ENCODE measurements at regions of chr11 and their contacts with region 1.

Region 1: GRCh38 chr11:111370902-111371578 is 8.0 kb downstream of the POU2AF1 start:
- DNase-seq: peak; percentile 69
- H3K4me3 Mint-ChIP-seq: no peak overlapping the region
- H3K27ac Mint-ChIP-seq: peak overlapping the region; percentile 87
- H3K4me1 Mint-ChIP-seq: peaks cover 43% of the 10 kb centered on the region
- H3K27me3 Mint-ChIP-seq: no peaks in the 10 kb centered on the region

Region 2: DNA sequence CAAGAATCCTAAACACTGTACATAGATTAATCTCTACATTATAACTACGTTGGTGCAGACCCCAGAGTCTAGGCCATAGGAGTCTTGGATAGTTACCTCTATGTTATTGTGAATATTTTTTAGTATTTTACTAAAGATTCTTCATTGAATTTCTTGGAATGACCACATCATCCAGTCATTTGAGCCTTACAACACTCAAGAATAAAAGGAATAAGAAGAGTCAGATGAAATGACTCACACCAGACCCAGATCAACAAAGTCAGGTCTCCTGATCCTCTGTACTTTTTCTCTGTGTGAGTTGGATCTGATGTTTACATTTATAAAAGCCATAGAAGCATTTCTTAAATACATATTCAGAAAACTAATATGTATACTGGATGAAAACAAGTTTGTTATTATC is 479.6 kb before region 1 on chr11:
- CTCF ChIA-PET with region 1: no interaction called
- POLR2A ChIA-PET with region 1: no interaction called
- intact Hi-C with region 1: no loop called
- DNase-seq: no peak
- H3K4me3 Mint-ChIP-seq: no peak overlapping the region
- H3K27ac Mint-ChIP-seq: no peak overlapping the region
- H3K4me1 Mint-ChIP-seq: no peaks in the 10 kb centered on the region
- H3K27me3 Mint-ChIP-seq: peaks cover 4% of the 10 kb centered on the region

Region 3: DNA sequence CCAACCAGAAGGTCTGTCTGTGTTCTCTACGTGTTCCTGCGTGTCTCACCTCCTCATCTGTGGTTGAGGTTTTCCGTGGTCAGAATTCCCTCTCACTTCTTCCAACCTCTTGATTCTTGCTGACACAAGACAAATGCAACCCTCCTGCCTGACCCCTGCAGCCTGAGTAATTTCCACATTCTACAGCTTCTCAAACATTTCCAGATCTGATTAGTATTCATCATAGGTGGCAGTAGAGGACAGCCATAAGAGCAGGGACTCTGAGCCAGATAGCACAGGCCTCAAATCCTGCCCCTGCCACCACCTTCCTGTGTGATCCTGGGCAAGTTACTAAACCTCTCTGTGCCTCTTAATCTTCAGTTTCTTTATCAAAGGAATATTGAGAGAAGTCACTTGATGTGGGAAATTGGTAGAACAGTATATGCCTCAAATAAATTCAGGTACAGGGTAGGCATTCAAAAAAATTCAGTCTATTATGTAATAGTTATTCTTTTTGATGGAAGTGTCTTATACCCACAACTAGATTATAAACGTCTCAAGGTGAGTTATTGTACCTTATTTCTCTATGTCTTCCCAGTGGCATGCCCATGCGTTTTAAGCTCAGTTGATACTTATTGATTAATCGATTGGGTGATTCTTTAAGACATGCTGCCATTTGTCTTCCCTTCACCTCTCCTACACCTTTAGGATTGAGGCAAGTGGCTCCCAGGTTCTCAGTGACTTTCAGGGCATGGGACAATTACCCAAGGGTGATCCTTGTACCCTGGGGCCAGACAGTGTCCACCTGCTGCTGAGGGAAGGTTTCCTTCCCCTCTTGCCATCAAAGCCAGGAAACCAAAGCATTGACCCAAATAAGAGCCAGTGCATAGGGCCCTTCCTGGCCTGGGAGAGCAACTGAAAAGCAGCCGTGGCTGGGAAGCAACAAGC is 11.6 kb before region 1 on chr11:
- CTCF ChIA-PET with region 1: interaction called, 3 read pairs
- POLR2A ChIA-PET with region 1: no interaction called
- intact Hi-C with region 1: loop called (anchors 1 kb)
- DNase-seq: peak; percentile 22
- H3K4me3 Mint-ChIP-seq: no peak overlapping the region
- H3K27ac Mint-ChIP-seq: no peak overlapping the region
- H3K4me1 Mint-ChIP-seq: peaks cover 4% of the 10 kb centered on the region
- H3K27me3 Mint-ChIP-seq: no peaks in the 10 kb centered on the region

Region 4: GRCh38 chr11:111409915-111410314 is 38.9 kb after region 1 on chr11:
- CTCF ChIA-PET with region 1: interaction called, 4 read pairs
- POLR2A ChIA-PET with region 1: interaction called, 49 read pairs
- intact Hi-C with region 1: loop called (anchors 1 kb)
- DNase-seq: no peak
- H3K4me3 Mint-ChIP-seq: no peak overlapping the region
- H3K27ac Mint-ChIP-seq: no peak overlapping the region
- H3K4me1 Mint-ChIP-seq: peaks cover 39% of the 10 kb centered on the region
- H3K27me3 Mint-ChIP-seq: no peaks in the 10 kb centered on the region

Measured in activated CD4-positive, alpha-beta memory T cell treated with anti-CD3 and anti-CD28 coated beads for 36 hours (primary cell).